Activated naive CD8-positive, alpha-beta T cell treated with anti-CD3 and anti-CD28 coated beads, Interleukin-2, amount 10 ng/mL, durations not matched to agents 7 days and 5 days (primary cell): ENCODE measurements at regions of chr19 and their contacts with region 1.

Region 1: DNA sequence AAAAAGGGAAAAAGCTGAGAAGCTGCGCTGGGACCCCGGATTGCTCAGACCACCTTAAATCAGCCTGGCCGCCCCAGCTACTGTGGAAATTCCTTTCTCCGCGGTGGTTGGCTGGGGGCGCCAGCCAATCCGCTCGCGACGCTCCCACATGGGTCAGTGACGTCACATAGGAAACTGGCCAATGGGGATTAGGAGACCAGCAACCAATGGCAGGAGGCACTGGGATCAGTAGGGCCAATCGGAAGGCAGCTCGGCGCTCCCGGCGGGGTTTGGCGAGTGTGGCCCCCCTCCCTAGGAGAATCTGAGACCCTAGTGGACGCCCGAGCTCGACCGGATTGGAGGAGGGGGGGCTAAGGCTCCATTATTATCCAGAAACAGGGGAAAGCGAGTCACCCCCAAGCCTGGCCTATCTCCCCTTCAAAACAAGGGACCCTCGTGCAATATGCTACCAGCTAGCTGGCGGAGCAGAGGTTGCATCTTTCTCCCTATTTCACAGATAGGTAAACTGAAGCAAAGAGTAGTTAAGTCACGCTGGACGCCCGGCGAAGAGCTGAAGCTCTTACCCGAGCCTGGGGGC is 6.5 kb upstream of the TLE2 start:
- DNase-seq: peak; percentile 88
- ATAC-seq: peak; percentile 95
- H3K4me3 Mint-ChIP-seq: peak overlapping the region; percentile 83
- H3K27ac Mint-ChIP-seq: peak overlapping the region; percentile 96
- H3K4me1 Mint-ChIP-seq: peaks cover 16% of the 10 kb centered on the region
- H3K27me3 Mint-ChIP-seq: peaks cover 38% of the 10 kb centered on the region

Region 2: GRCh38 chr19:2977001-2977685 is 58.5 kb before region 1 on chr19 and contains the start of gene TLE6:
- POLR2A ChIA-PET with region 1: interaction called, 12 read pairs
- DNase-seq: peak; percentile 94
- ATAC-seq: peak; percentile 100
- H3K4me3 Mint-ChIP-seq: peak within 1 kb of the TSS; percentile 99
- H3K27ac Mint-ChIP-seq: peak within 1 kb of the TSS; percentile 96
- H3K4me1 Mint-ChIP-seq: peaks cover 16% of the 10 kb centered on the region
- H3K27me3 Mint-ChIP-seq: peaks cover 19% of the 10 kb centered on the region
- total RNA-seq, gene TLE6: 4.4 to 5.4 TPM

Region 3: DNA sequence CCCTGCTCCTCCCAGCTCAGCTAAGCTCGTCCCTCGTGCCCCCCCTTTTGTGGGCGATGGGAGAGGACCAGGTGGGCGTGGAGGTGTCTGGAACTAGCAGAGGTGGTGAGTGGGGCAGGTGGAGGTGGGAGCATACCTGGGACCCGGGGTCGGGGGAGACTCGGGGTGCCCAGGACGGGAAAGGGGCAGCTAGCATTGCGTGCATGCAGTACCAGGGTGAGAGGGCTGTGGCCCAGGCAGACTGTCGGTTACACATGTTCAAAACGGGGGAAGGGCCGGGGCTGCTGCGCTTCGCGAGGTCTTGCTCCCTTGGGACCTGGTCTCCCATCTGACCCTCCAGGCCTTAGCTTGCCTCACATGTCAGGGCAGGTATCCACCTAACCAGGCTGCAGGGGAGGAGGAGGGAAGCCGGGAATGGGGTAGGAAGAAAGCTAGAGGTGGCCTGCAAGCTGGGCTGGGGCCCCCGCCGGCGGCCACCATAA is 17.6 kb after region 1 on chr19:
- POLR2A ChIA-PET with region 1: interaction called, 22 read pairs
- DNase-seq: no peak
- ATAC-seq: no peak
- H3K4me3 Mint-ChIP-seq: no peak overlapping the region
- H3K27ac Mint-ChIP-seq: no peak overlapping the region
- H3K4me1 Mint-ChIP-seq: peaks cover 10% of the 10 kb centered on the region
- H3K27me3 Mint-ChIP-seq: peaks cover 7% of the 10 kb centered on the region

Region 4: DNA sequence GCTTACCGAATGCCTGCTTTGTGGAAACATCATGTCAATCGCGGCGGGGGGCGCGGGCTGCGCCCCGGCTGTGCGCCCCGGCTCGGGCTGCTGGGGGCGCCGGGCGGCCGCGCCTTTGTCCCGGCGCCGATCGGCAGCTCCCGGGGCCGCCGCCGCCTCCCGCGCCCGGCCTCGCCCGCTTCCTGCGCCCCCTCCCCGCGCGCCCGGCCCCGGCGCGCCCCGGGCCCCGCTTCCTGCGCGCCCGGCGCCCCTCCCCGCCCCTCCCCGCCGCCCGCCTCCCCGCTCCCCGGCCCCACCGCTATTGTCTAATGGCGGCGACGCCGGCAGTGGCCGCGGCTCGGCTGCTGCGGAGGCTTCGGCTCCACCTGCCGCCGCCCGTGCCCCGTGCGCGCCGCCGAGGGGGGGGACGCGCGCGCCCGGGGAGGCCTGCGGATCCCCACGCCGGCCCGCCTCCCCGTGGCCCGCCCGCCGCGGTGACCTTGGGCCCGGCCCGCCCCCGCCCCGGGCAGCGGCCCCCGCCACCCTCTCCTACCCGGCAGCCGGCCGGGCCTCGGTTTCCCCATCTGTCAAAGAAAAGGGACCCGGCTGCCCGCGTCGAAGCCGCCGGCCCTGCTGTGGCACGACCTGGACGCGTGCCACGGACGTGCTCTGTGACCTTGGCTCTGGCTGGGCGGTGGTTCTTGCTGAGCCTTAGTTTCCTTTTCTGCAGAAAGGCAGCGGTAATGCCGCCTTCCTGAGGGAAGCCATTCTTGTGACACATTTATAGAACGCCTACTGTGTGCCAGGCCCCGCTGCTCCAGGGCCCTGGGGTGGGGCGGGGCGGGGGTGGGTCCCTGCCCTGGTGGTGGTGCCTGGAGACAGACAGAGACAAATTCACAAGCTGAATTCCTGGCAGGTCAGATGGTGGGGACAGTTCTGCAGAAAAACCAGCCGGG is 26.8 kb after region 1 on chr19 and contains the start of gene TLE5:
- POLR2A ChIA-PET with region 1: interaction called, 49 read pairs
- DNase-seq: peak; percentile 83
- ATAC-seq: peak; percentile 30
- H3K4me3 Mint-ChIP-seq: peak within 1 kb of the TSS; percentile 90
- H3K27ac Mint-ChIP-seq: peak within 1 kb of the TSS; percentile 93
- H3K4me1 Mint-ChIP-seq: peaks cover 27% of the 10 kb centered on the region
- H3K27me3 Mint-ChIP-seq: no peaks in the 10 kb centered on the region
- total RNA-seq, gene TLE5: 697 to 718 TPM